AG04450 (cell line): ENCODE measurements at regions of chr16 and their contacts with region 1.

Region 1: GRCh38 chr16:27109666-27110523 is 43.2 kb downstream of the C16orf82 start:
- DNase-seq: peak; percentile 18
- H3K4me3 ChIP-seq: peak overlapping the region; percentile 59
- H3K27ac ChIP-seq: no peak overlapping the region
- H3K27me3 ChIP-seq: no peaks in the 10 kb centered on the region
- CTCF ChIP-seq: peak; percentile 78

Region 2: GRCh38 chr16:25257956-25258823 is 1851.7 kb before region 1 on chr16:
- CTCF ChIA-PET with region 1: interaction called, 11 read pairs
- POLR2A ChIA-PET with region 1: no interaction called
- DNase-seq: peak; percentile 77
- H3K4me3 ChIP-seq: peak overlapping the region; percentile 85
- H3K27ac ChIP-seq: peak overlapping the region; percentile 99
- H3K27me3 ChIP-seq: no peaks in the 10 kb centered on the region
- CTCF ChIP-seq: no peak

Region 3: DNA sequence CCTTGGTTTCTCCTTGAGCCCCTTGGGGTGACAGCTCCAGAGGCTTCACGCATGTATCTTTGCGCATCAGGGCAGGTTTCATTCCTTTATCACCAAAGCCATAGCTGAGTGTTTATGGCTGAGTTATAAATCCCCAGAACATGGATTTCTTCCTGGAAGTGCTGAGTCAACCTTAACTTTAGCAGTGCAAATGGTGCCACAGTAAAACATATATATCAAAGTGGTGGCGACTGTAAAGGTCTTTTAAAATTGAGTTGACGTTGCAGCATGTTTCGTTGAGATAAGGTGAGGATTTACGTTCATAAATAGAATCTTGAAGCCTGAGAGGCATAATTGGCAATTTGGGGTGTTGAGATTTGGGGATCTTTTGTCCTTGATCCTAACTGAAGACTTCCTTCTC is 1204.1 kb before region 1 on chr16:
- CTCF ChIA-PET with region 1: interaction called, 15 read pairs
- POLR2A ChIA-PET with region 1: no interaction called
- DNase-seq: no peak
- H3K4me3 ChIP-seq: no peak overlapping the region
- H3K27ac ChIP-seq: no peak overlapping the region
- H3K27me3 ChIP-seq: no peaks in the 10 kb centered on the region
- CTCF ChIP-seq: no peak

Region 4: GRCh38 chr16:26762594-26762993 is 347.3 kb before region 1 on chr16:
- CTCF ChIA-PET with region 1: interaction called, 12 read pairs
- POLR2A ChIA-PET with region 1: no interaction called
- DNase-seq: no peak
- H3K4me3 ChIP-seq: no peak overlapping the region
- H3K27ac ChIP-seq: no peak overlapping the region
- H3K27me3 ChIP-seq: no peaks in the 10 kb centered on the region
- CTCF ChIP-seq: no peak

Region 5: DNA sequence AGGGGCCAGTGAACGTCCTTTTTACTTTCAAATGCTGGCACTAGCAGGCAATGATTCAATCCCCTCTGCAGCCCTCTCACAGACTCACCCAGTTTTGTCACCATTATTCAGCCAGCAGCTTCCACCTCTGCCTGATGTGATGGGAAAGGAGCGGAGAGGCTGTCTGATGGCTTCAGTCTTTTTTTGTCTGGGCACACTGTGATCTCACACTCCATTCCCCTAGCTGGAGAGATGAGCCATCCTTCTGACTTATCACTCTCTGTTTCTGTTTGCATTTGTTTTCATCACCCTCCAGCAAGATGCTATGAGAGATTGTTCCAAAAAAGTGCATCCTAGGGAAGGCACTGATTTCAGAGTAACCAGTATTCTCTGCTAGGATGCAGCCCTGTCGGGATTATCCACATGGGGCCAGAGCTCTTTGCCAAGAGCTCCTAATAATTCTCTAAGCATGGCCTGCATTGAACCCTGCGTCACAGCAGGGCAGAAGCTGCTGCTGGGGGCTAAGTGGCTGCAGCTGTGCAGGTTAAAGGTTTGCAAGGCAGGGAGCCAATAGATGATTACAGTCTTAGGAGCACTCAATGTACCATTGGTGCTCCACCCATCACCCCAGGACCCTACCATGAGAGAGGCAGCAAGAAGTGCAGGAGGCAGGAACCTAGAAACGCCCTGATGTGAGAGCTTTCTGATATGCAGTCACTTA is 279.3 kb before region 1 on chr16:
- CTCF ChIA-PET with region 1: no interaction called
- POLR2A ChIA-PET with region 1: no interaction called
- DNase-seq: no peak
- H3K4me3 ChIP-seq: no peak overlapping the region
- H3K27ac ChIP-seq: no peak overlapping the region
- H3K27me3 ChIP-seq: peaks cover 4% of the 10 kb centered on the region
- CTCF ChIP-seq: no peak

Region 6: DNA sequence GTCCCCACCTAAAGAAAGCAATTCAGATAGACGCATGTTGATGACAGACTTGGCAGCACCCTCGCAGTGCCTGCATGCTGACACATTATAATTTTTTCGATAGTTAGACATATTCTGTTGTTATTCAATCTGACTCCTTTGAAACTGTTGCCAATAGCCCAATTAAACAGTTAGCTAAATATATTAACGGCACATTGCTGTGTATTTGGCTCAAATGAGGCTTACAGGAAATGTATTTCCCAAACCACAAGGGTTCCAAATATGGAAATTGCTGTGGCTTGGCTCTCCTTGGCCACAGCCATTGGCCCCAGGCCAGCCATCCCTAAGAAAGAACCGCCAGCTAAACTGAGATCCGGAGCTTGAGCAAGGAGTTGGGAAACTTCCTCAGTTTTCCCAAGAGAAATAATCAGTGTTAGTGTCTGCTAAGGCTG is 12.1 kb before region 1 on chr16:
- CTCF ChIA-PET with region 1: interaction called, 14 read pairs
- POLR2A ChIA-PET with region 1: interaction called, 8 read pairs
- DNase-seq: no peak
- H3K4me3 ChIP-seq: no peak overlapping the region
- H3K27ac ChIP-seq: no peak overlapping the region
- H3K27me3 ChIP-seq: no peaks in the 10 kb centered on the region
- CTCF ChIP-seq: no peak

Region 7: DNA sequence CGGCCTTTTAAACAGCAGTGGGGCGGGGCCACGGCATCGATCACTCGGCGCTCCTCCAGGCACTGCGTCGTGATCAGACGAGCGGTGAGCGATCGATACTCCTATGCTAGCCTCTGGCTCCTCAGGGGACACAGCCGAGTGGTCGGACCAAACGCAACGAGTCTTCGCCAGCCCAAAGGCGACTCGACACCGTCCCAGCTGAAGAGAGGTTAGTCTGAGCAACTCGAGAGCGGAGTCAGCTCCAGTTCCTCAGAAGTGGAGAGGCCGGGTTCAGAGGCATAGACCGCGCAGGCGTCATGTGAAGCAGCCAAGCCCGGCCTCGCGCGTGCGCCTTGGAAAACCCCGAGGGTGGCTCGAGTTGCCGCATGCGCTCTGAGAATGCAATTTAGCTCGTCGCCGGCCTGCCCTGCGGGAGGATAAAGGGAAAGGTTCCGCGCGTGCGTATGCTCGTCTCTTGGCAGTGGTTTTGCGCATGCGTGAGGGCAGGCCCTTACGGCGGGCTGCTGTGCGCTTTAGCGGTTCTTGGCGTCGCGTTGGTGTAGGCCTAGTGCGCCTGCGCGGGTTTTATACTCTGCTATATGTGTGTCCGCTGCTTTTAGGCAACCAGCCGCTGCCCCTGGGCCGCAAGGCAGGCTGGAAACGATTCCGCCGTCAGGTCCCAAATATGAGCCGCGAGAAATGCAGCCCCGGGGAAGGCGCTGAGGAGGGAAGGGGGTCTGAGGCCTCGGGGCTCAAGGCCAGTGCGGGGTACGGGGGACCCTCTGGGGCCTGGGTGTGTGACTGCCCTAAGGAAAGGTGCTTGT is 93.7 kb after region 1 on chr16 and contains the start of gene KDM8:
- CTCF ChIA-PET with region 1: interaction called, 12 read pairs
- POLR2A ChIA-PET with region 1: interaction called, 6 read pairs
- DNase-seq: peak; percentile 99
- H3K4me3 ChIP-seq: peak within 1 kb of the TSS; percentile 93
- H3K27ac ChIP-seq: peak within 1 kb of the TSS; percentile 98
- H3K27me3 ChIP-seq: no peaks in the 10 kb centered on the region
- CTCF ChIP-seq: no peak
- polyA plus RNA-seq, gene KDM8: 2.5 and 2.8 TPM in 2 replicates

Region 8: GRCh38 chr16:27579087-27579980 is 469.4 kb after region 1 on chr16:
- CTCF ChIA-PET with region 1: no interaction called
- POLR2A ChIA-PET with region 1: no interaction called
- DNase-seq: peak; percentile 3
- H3K4me3 ChIP-seq: no peak overlapping the region
- H3K27ac ChIP-seq: peak overlapping the region; percentile 75
- H3K27me3 ChIP-seq: no peaks in the 10 kb centered on the region
- CTCF ChIP-seq: no peak